ENCODE measurements at regions of chr9 and their contacts with region 1.

Region 1: GRCh38 chr9:35814841-35815543 is at the start of gene HINT2:
- DNase-seq: peak; percentile 84 to 98 (median 96)
- ATAC-seq: peak; percentile 86
- H3K4me3 ChIP-seq: peak within 1 kb of the TSS; percentile 100
- H3K4me3 Mint-ChIP-seq: peak within 1 kb of the TSS; percentile 91 to 100 (median 96)
- H3K27ac ChIP-seq: peak within 1 kb of the TSS; percentile 77
- H3K27ac Mint-ChIP-seq: peak within 1 kb of the TSS; percentile 87 to 99 (median 95)
- H3K4me1 ChIP-seq: peaks cover 19 to 27% of the 10 kb centered on the region in 2 donors
- H3K4me1 Mint-ChIP-seq: peaks cover 23 to 43% (median 38%) of the 10 kb centered on the region in 7 donors
- H3K27me3 ChIP-seq: no peaks in the 10 kb centered on the region
- H3K27me3 Mint-ChIP-seq: peaks cover 0 to 12% (median 0%) of the 10 kb centered on the region in 5 donors
- total RNA-seq, gene HINT2: 14.3 to 50.7 (median 22.2) TPM

Region 2: DNA sequence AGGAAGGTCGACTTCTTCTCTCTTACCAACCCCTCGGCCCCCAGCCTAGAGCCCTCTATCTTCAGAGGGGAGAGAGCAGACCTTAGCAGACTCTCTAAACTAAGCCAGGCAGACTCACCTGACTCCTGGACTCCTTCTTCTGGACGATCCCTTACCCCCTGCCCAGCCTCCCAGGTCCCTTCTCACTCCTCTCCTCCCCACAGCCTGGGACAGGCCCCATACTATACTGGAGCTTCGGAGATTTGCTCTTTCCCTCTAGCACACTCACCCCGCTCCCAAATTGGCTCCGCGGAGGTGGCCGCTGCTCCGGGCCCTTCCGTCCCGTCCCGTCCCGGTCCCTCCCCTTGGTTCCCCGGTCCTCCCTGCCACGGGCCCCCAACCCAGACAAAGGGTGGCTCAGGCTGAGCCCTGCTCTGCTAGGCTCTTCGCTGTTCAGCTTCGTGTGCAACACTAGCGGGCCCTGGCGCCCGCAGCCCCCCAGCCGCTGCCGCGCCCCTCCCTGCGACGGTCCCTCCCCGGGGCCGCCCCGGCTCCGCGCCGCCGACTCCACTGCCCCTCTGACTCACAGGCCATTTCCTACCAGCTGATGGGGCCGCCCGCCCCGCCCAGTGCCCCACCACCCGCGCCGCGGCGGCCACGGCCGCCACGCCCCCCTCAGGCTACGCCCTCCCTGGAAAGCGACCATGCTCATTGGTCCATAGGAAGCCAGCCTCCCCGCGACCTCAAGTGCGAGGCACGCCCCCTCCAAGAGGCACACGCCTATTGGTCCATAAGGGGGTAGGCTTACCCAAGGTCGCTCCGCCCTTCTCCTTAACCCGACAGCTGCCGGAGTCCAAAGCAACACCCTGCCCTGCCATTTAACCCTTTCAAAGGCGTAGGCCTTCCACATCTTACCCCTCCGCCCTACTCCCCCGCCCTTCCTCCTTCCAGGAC is 703.7 kb before region 1 on chr9:
- CTCF ChIA-PET with region 1: no interaction called
- POLR2A ChIA-PET with region 1: no interaction called
- intact Hi-C with region 1: loop called (anchors 1 to 2 kb)
- DNase-seq: peak; percentile 77 to 96 (median 91)
- ATAC-seq: peak; percentile 86
- H3K4me3 ChIP-seq: peak overlapping the region; percentile 69
- H3K4me3 Mint-ChIP-seq: peak overlapping the region; percentile 55 to 87 (median 80)
- H3K27ac ChIP-seq: peak overlapping the region; percentile 71
- H3K27ac Mint-ChIP-seq: peak overlapping the region; percentile 62 to 94 (median 85)
- H3K4me1 ChIP-seq: peaks cover 36 to 37% of the 10 kb centered on the region in 2 donors
- H3K4me1 Mint-ChIP-seq: peaks cover 29 to 63% (median 58%) of the 10 kb centered on the region in 7 donors
- H3K27me3 ChIP-seq: no peaks in the 10 kb centered on the region
- H3K27me3 Mint-ChIP-seq: no peaks in the 10 kb centered on the region

Region 3: GRCh38 chr9:35748858-35749514 is 66.0 kb before region 1 on chr9 and contains the starts of genes GBA2 and RGP1:
- CTCF ChIA-PET with region 1: no interaction called
- POLR2A ChIA-PET with region 1: interaction called, 8 read pairs
- intact Hi-C with region 1: loop called (anchors 1 kb)
- DNase-seq: peak; percentile 36 to 82 (median 51)
- ATAC-seq: peak; percentile 84
- H3K4me3 ChIP-seq: peak within 1 kb of the TSS; percentile 84
- H3K4me3 Mint-ChIP-seq: peak within 1 kb of the TSS; percentile 89 to 98 (median 96)
- H3K27ac ChIP-seq: peak within 1 kb of the TSS; percentile 87
- H3K27ac Mint-ChIP-seq: peak within 1 kb of the TSS; percentile 89 to 97 (median 96)
- H3K4me1 ChIP-seq: peaks cover 32 to 33% of the 10 kb centered on the region in 2 donors
- H3K4me1 Mint-ChIP-seq: peaks cover 36 to 66% (median 49%) of the 10 kb centered on the region in 7 donors
- H3K27me3 ChIP-seq: no peaks in the 10 kb centered on the region
- H3K27me3 Mint-ChIP-seq: no peaks in the 10 kb centered on the region
- total RNA-seq, gene GBA2: 22.7 to 55.4 (median 49.9) TPM
- total RNA-seq, gene RGP1: 21.2 to 28.8 (median 23.3) TPM

Region 4: GRCh38 chr9:35790385-35791296 is 24.4 kb before region 1 on chr9:
- CTCF ChIA-PET with region 1: interaction called, 3 read pairs
- POLR2A ChIA-PET with region 1: no interaction called
- intact Hi-C with region 1: loop called (anchors 1 kb)
- DNase-seq: peak; percentile 36 to 70 (median 62)
- ATAC-seq: peak; percentile 90
- H3K4me3 ChIP-seq: no peak overlapping the region
- H3K4me3 Mint-ChIP-seq: peak overlapping the region in 2 of 10 donors; percentile 31 to 58
- H3K27ac ChIP-seq: no peak overlapping the region
- H3K27ac Mint-ChIP-seq: no peak overlapping the region
- H3K4me1 ChIP-seq: no peaks in the 10 kb centered on the region
- H3K4me1 Mint-ChIP-seq: peaks cover 6 to 21% (median 10%) of the 10 kb centered on the region in 7 donors
- H3K27me3 ChIP-seq: no peaks in the 10 kb centered on the region
- H3K27me3 Mint-ChIP-seq: no peaks in the 10 kb centered on the region

Region 5: DNA sequence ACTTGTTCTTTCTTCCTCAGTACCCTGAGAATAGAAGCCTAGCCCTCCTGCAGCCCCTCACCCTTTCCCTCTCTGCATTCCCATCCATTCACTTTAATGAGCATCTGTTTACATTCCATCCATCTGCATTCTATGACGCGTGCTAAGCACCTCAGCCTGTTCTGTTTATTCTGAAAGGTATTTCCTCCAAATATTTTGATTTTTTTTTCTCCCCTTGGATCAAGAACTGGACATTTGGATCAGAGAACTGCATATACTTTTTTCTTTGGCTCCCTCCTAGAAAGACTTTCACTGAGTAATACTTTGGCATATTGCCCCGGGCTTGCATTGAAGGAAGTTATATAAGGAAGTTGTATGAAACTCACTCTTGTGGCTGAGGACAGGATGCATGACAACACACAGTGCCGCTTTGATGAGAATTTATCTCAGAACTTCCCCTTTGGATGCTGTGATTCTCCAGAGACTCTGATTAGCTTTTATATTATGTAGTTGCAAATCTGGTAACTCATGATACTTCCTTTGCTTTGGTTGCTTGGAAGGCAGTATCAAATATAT is 29.8 kb after region 1 on chr9:
- CTCF ChIA-PET with region 1: no interaction called
- POLR2A ChIA-PET with region 1: interaction called, 5 read pairs
- intact Hi-C with region 1: loop called in 1 of 2 experiments (anchors 1 kb)
- DNase-seq: peak in 7 of 9 donors; percentile 60 to 81 (median 77)
- ATAC-seq: peak; percentile 90
- H3K4me3 ChIP-seq: no peak overlapping the region
- H3K4me3 Mint-ChIP-seq: peak overlapping the region in 7 of 10 donors; percentile 4 to 56 (median 21)
- H3K27ac ChIP-seq: no peak overlapping the region
- H3K27ac Mint-ChIP-seq: peak overlapping the region in 6 of 9 donors; percentile 30 to 77 (median 58)
- H3K4me1 ChIP-seq: peaks cover 0 to 19% of the 10 kb centered on the region in 2 donors
- H3K4me1 Mint-ChIP-seq: peaks cover 14 to 30% (median 26%) of the 10 kb centered on the region in 7 donors
- H3K27me3 ChIP-seq: no peaks in the 10 kb centered on the region
- H3K27me3 Mint-ChIP-seq: no peaks in the 10 kb centered on the region

Region 6: GRCh38 chr9:35896570-35896969 is 81.6 kb after region 1 on chr9:
- CTCF ChIA-PET with region 1: no interaction called
- POLR2A ChIA-PET with region 1: no interaction called
- intact Hi-C with region 1: no loop called
- DNase-seq: no peak
- ATAC-seq: no peak
- H3K4me3 ChIP-seq: no peak overlapping the region
- H3K4me3 Mint-ChIP-seq: no peak overlapping the region
- H3K27ac ChIP-seq: no peak overlapping the region
- H3K27ac Mint-ChIP-seq: no peak overlapping the region
- H3K4me1 ChIP-seq: no peaks in the 10 kb centered on the region
- H3K4me1 Mint-ChIP-seq: no peaks in the 10 kb centered on the region
- H3K27me3 ChIP-seq: no peaks in the 10 kb centered on the region
- H3K27me3 Mint-ChIP-seq: peaks cover 6 to 56% (median 18%) of the 10 kb centered on the region in 5 donors

Region 7: GRCh38 chr9:36400332-36401163 is 585.6 kb after region 1 on chr9:
- CTCF ChIA-PET with region 1: no interaction called
- POLR2A ChIA-PET with region 1: no interaction called
- intact Hi-C with region 1: loop called in 1 of 2 experiments (anchors 10 kb)
- DNase-seq: peak; percentile 83 to 94 (median 91)
- ATAC-seq: peak; percentile 88
- H3K4me3 ChIP-seq: peak overlapping the region; percentile 77
- H3K4me3 Mint-ChIP-seq: peak overlapping the region; percentile 85 to 97 (median 92)
- H3K27ac ChIP-seq: peak overlapping the region; percentile 94
- H3K27ac Mint-ChIP-seq: peak overlapping the region; percentile 92 to 98 (median 95)
- H3K4me1 ChIP-seq: peaks cover 16 to 26% of the 10 kb centered on the region in 2 donors
- H3K4me1 Mint-ChIP-seq: peaks cover 32 to 60% (median 54%) of the 10 kb centered on the region in 7 donors
- H3K27me3 ChIP-seq: no peaks in the 10 kb centered on the region
- H3K27me3 Mint-ChIP-seq: peaks cover 0 to 2% (median 0%) of the 10 kb centered on the region in 5 donors

Measured in naive thymus-derived CD4-positive, alpha-beta T cell (primary cell).